Activated B cell treated with CpG ODN at 0.5 μM for 24 hours (primary cell): ENCODE measurements at regions of chr6 and their contacts with region 1.

Region 1: GRCh38 chr6:145814501-145815308 is at the start of gene FBXO30:
- DNase-seq: peak; percentile 97
- ATAC-seq: peak; percentile 91
- H3K4me3 Mint-ChIP-seq: peak within 1 kb of the TSS; percentile 95
- H3K27ac Mint-ChIP-seq: peak within 1 kb of the TSS; percentile 92
- H3K4me1 Mint-ChIP-seq: peaks cover 33% of the 10 kb centered on the region
- H3K27me3 Mint-ChIP-seq: no peaks in the 10 kb centered on the region
- CTCF ChIP-seq: no peak
- total RNA-seq, gene FBXO30: 5.8 and 6.1 TPM in 2 replicates

Region 2: GRCh38 chr6:145866456-145867396 is 52.0 kb after region 1 on chr6:
- CTCF ChIA-PET with region 1: no interaction called
- POLR2A ChIA-PET with region 1: interaction called, 20 read pairs
- intact Hi-C with region 1: loop called (anchors 1 kb)
- DNase-seq: no peak
- ATAC-seq: peak; percentile 30
- H3K4me3 Mint-ChIP-seq: peak overlapping the region; percentile 25
- H3K27ac Mint-ChIP-seq: peak overlapping the region; percentile 79
- H3K4me1 Mint-ChIP-seq: peaks cover 54% of the 10 kb centered on the region
- H3K27me3 Mint-ChIP-seq: no peaks in the 10 kb centered on the region
- CTCF ChIP-seq: no peak